HEK293 (cell line): ENCODE measurements at regions of chr13 and their contacts with region 1.

Region 1: DNA sequence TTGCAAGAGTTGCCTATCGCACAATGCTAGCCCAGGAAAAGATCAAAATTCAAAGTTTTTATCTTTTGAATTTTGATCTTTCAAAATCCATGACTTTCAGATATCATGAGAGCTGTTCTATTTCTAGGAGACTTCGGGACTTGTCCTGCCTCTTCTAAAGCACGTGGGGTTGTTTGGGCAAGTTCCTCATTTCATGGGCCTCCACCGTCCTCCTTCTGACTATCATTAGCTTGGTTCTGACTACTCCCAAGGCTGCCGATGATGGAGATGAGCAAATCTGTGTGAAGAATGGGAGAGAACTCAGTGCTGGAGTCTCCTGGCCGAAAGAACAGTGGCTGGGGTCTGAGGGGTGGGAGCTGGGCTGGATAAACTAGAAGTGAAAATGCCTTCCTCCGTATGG is 86.5 kb downstream of the COL4A1 start:
- H3K4me3 ChIP-seq: no peak overlapping the region
- H3K27ac ChIP-seq: no peak overlapping the region
- H3K4me1 ChIP-seq: no peaks in the 10 kb centered on the region
- CTCF ChIP-seq: no peak

Region 2: DNA sequence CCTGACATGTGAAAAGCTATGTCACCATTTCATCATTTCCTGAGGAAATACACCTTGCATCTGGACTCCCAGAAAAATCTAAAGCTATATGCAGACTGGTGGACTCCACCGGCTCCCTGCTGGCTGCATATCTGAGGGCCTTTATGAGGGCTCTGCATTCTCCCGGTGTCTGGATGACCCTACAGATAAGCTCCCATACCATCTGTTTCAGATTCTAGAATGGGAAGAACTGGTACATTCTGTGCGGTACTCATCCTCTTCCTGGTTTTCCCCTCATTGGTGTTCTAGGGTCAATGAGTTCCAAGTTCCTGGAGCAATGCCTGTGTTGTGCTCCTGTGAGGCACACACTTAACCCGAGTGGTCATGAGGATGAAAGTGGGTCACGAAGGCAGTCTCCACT is 26.1 kb after region 1 on chr13:
- CTCF ChIA-PET with region 1: interaction called, 10 read pairs
- POLR2A ChIA-PET with region 1: no interaction called
- H3K4me3 ChIP-seq: no peak overlapping the region
- H3K27ac ChIP-seq: no peak overlapping the region
- H3K4me1 ChIP-seq: no peaks in the 10 kb centered on the region
- CTCF ChIP-seq: no peak

Region 3: DNA sequence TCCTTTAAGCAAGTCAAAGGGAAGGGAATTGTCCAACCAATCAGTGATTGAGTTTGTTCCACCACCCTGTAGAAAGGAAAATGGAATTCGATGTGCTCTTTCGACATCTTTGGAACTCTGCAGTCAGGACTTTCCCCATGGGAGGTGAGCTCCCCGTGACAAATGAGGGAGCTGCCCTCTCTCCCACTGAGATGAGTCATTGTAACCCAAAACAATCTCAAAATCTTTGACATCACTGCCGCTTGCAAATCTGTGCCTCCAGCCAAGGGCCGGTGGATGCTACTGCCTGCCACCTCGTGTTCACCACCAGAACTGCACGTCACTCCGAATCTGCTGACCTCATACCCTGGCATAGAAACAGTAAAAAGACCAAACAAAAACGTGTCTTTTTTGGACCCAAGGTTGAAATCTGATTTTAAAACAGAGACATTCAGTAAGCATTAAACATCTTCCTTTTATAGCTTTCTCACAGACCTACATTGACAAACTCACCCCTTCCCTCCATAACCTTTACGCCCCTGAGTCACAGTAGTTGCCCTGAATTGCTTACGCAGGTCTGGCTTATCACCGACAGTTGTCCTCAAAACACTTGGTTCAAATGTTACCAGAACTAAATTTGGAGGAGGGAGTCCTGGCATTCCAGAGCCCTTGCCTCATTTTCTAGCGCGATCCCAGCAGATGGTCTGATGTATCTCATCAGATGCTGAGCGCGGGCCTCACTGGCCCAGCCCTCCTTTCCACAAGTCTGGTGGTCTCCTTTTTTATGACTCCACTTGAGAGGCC is 191.9 kb after region 1 on chr13:
- CTCF ChIA-PET with region 1: interaction called, 12 read pairs
- POLR2A ChIA-PET with region 1: no interaction called
- H3K4me3 ChIP-seq: no peak overlapping the region
- H3K27ac ChIP-seq: no peak overlapping the region
- H3K4me1 ChIP-seq: no peaks in the 10 kb centered on the region; the same call in 1 of the 2 replicates
- CTCF ChIP-seq: no peak